ENCODE measurements at regions of chr9 and their contacts with region 1.

Region 1: GRCh38 chr9:91949946-91950664 is at the start of gene ROR2:
- DNase-seq: peak; percentile 96
- H3K4me3 ChIP-seq: peak within 1 kb of the TSS; percentile 35 to 58
- H3K27ac ChIP-seq: peak within 1 kb of the TSS in 1 of 2 experiments; percentile 79; a peak in 1 of 4 replicates
- H3K4me1 ChIP-seq: peaks cover 0 to 15% of the 10 kb centered on the region in 2 experiments; a peak in 2 of 4 replicates
- H3K27me3 ChIP-seq: peaks cover 33% of the 10 kb centered on the region
- CTCF ChIP-seq: peak; percentile 43
- EP300 ChIP-seq: no peak
- RAD21 ChIP-seq: peak; percentile 67
- polyA plus RNA-seq, gene ROR2: 0.34 and 0.43 TPM in 2 replicates

Region 2: GRCh38 chr9:91734371-91734981 is 215.6 kb before region 1 on chr9:
- CTCF ChIA-PET with region 1: interaction called, 48 read pairs
- POLR2A ChIA-PET with region 1: no interaction called
- DNase-seq: peak; percentile 88
- H3K4me3 ChIP-seq: no peak overlapping the region; a peak in 1 of 4 replicates
- H3K27ac ChIP-seq: no peak overlapping the region
- H3K4me1 ChIP-seq: peaks cover 0 to 22% of the 10 kb centered on the region in 2 experiments; a peak in 2 of 4 replicates
- H3K27me3 ChIP-seq: peaks cover 10% of the 10 kb centered on the region; the same call in 1 of the 2 replicates
- CTCF ChIP-seq: peak; percentile 92
- EP300 ChIP-seq: no peak
- RAD21 ChIP-seq: peak; percentile 69

Region 3: GRCh38 chr9:91775011-91775707 is 174.9 kb before region 1 on chr9:
- CTCF ChIA-PET with region 1: interaction called, 495 read pairs
- POLR2A ChIA-PET with region 1: interaction called, 4 read pairs
- DNase-seq: peak; percentile 86
- H3K4me3 ChIP-seq: peak overlapping the region in 1 of 2 experiments; percentile 49; a peak in 1 of 4 replicates
- H3K27ac ChIP-seq: no peak overlapping the region
- H3K4me1 ChIP-seq: peaks cover 0 to 37% of the 10 kb centered on the region in 2 experiments; a peak in 1 of 4 replicates
- H3K27me3 ChIP-seq: peaks cover 37% of the 10 kb centered on the region; the same call in 1 of the 2 replicates
- CTCF ChIP-seq: peak; percentile 73
- EP300 ChIP-seq: no peak
- RAD21 ChIP-seq: peak; percentile 91

Region 4: DNA sequence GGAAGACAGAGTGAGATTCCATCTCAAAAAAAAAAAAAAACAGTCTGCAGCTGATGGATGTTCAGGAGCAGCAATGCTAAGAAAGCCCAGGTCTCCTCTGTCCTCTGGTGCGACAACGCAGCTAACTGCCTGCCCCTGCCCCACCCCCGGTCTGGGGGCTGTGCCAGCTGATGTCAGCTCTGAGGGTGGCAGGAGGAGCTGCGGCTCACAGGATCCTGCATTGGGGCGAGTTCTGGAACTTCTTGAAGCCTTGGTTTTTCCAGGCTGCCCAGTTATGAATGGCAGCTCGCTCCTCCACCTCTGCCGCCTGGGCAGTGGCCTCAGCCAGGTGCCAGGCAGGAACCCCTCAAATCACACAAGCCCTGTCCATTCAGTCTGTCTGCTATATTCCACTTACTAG is 113.6 kb before region 1 on chr9:
- CTCF ChIA-PET with region 1: interaction called, 10 read pairs
- POLR2A ChIA-PET with region 1: no interaction called
- DNase-seq: no peak
- H3K4me3 ChIP-seq: no peak overlapping the region
- H3K27ac ChIP-seq: no peak overlapping the region
- H3K4me1 ChIP-seq: peaks cover 0 to 31% of the 10 kb centered on the region in 2 experiments; a peak in 1 of 4 replicates
- H3K27me3 ChIP-seq: no peaks in the 10 kb centered on the region
- CTCF ChIP-seq: no peak
- EP300 ChIP-seq: no peak
- RAD21 ChIP-seq: no peak

Region 5: DNA sequence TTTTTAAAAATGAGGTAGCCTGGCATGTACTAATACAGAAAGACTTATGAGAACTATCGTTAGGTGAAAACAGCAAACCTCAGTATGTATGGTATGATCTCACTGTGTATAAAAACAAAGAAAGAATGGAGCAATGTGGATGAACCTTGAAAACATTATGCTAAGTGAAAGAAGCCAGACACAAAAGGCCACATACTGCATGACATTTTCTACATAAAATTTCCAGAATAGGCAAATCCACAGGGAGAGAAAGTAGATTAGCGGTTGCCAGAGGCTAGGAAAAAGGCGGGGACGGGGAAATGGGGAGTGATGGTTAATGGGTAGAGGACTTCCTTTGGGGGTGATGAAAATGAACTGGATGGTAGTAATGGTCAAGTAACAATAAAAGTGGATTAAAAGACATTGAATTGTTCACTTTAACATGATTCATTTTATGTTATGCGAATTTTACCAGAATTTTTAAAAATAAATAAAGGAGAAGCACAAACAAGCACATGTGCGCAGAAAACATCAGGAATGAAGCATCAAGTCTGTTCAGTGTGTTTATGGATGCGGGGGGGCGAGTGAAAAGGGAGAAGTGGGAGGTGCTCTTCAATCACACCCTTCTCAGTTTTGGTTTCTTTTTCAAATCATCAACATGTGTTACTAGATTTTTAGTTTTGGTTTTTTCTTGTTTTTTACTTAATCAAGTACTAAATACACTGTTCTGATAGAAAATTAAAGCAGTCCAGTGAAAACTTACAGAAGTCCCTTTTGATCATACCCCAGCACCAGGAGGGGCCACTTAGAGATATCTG is 16.4 kb before region 1 on chr9:
- CTCF ChIA-PET with region 1: interaction called, 48 read pairs
- POLR2A ChIA-PET with region 1: no interaction called
- DNase-seq: peak; percentile 68
- H3K4me3 ChIP-seq: no peak overlapping the region
- H3K27ac ChIP-seq: peak overlapping the region in 1 of 2 experiments; percentile 86; a peak in 2 of 4 replicates
- H3K4me1 ChIP-seq: peaks cover 0 to 15% of the 10 kb centered on the region in 2 experiments; a peak in 2 of 4 replicates
- H3K27me3 ChIP-seq: no peaks in the 10 kb centered on the region
- CTCF ChIP-seq: no peak
- EP300 ChIP-seq: peak in 1 of 2 experiments; percentile 51; a peak in 1 of 4 replicates
- RAD21 ChIP-seq: no peak; the same call in 1 of the 2 replicates

Region 6: DNA sequence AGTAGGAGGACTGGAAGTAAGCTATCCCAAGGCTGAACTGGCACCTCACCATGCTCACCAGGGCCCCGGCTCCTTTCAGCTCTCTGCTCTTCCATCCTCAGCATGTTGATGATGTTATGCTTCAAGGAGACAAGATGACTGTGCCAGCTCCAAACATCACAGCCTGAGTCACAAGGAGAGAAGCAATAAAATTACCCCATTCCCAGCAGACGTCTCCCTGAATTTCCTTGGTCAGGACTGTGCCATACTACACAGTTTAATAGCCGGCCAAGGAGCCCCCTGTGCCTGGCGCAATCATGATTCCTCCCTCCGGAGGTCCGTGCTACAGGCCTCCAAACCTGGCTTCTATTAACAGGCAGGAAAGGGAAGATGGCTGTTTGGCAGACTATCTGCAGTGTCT is 51.1 kb after region 1 on chr9:
- CTCF ChIA-PET with region 1: interaction called, 12 read pairs
- POLR2A ChIA-PET with region 1: no interaction called
- DNase-seq: no peak
- H3K4me3 ChIP-seq: no peak overlapping the region
- H3K27ac ChIP-seq: peak overlapping the region in 1 of 2 experiments; percentile 4; a peak in 1 of 4 replicates
- H3K4me1 ChIP-seq: no peaks in the 10 kb centered on the region
- H3K27me3 ChIP-seq: no peaks in the 10 kb centered on the region; the same call in 1 of the 2 replicates
- CTCF ChIP-seq: no peak
- EP300 ChIP-seq: no peak
- RAD21 ChIP-seq: no peak

Region 7: DNA sequence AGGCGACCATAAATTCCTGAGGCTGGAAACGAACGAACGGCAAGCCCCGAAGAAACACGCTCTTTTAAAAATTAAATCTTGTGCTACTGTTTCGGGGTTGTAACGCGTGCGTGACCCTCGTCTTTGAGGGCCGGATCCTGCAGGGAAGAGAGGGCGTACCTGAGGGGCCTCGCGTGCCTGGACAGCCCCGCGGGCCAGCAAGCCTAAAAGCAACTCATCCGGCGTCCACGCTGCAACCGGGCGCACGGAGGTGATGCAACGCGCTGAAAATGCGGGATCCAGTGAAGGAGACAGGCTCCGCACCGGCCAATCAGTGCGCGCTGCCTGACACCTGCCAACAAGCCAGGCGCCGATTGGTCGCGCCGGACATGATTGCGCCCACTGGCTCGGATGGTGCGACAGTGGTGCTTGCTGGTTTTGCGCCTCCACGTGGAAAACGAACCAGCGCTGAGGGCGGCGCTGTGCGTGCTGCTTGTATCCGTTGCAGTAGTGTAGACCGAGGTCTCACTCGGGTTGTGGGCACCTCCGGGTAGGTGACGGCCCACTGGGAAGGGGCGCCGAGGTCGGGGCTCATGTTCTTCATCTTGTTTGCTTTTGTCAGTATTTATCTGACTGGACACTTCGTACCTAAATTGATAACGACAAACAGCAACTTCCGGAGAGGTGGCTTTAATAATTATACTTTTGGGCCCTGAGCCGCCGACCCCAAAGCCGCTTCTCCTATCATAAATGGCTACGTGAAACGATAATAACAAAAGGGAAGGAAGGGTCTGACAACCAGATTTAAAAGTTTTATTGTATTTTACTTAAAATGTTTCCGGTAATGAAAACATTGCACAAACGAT is 343.6 kb after region 1 on chr9 and contains the start of gene IARS1:
- CTCF ChIA-PET with region 1: no interaction called
- POLR2A ChIA-PET with region 1: no interaction called
- DNase-seq: peak; percentile 96
- H3K4me3 ChIP-seq: peak within 1 kb of the TSS; percentile 81 to 87
- H3K27ac ChIP-seq: peak within 1 kb of the TSS; percentile 80 to 81
- H3K4me1 ChIP-seq: peaks cover 5 to 15% of the 10 kb centered on the region in 2 experiments; a peak in 3 of 4 replicates
- H3K27me3 ChIP-seq: no peaks in the 10 kb centered on the region
- CTCF ChIP-seq: peak; percentile 55
- EP300 ChIP-seq: no peak; a peak in 1 of 4 replicates
- RAD21 ChIP-seq: 0 out of 2 replicates have a peak, but pooled peaks have one; percentile 23
- polyA plus RNA-seq, gene IARS1: 30.4 and 32.9 TPM in 2 replicates